ENCODE measurements at regions of chr1 and their contacts with region 1.

Region 1: GRCh38 chr1:55140546-55140983 is 74.6 kb downstream of the USP24 start:
- DNase-seq: peak; percentile 50
- H3K4me3 Mint-ChIP-seq: no peak overlapping the region
- H3K27ac Mint-ChIP-seq: peak overlapping the region; percentile 46
- H3K4me1 Mint-ChIP-seq: peaks cover 17% of the 10 kb centered on the region
- H3K27me3 Mint-ChIP-seq: no peaks in the 10 kb centered on the region

Region 2: GRCh38 chr1:55150880-55151588 is 10.5 kb after region 1 on chr1:
- intact Hi-C with region 1: loop called (anchors 1 kb)
- DNase-seq: no peak
- H3K4me3 Mint-ChIP-seq: peak overlapping the region; percentile 68
- H3K27ac Mint-ChIP-seq: peak overlapping the region; percentile 91
- H3K4me1 Mint-ChIP-seq: peaks cover 20% of the 10 kb centered on the region
- H3K27me3 Mint-ChIP-seq: no peaks in the 10 kb centered on the region

Region 3: DNA sequence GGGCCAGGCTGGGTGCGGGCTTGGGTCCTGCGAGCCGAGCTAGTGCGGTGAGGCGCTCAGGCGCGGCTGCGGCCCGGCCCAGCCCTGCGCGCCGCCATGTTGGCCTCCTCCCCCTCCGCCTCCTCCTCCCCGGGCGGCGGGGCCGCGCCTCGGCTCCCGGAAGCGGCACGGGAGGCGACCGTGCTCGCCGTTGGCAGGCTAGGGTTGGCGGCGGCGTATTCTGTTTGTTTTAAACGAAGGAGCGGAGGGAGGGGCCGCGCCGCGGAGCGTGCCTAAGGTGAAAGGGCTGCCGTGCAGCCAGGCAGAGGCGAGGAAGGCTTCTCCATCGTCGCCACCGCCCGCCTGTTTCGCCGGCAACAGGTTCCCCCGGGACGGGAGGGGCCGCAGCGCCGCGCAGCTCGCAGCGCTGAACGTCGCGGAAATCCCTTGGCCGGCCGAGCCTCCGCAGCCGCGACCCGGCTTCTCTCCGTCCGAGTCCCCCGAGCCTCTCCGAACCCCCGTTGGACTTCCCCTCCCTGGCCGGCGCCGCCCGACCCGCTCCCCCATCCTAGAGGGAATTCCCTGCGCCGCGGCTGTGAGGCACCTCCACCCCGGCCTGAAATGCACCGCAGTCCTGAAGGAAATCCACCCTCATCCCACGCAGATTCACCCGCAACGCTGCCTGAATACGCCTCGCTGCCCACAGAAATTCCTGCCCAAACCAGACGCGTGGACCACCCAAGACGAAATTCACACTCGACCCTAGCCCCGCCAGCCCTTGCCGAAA is 74.9 kb after region 1 on chr1 and contains the start of gene USP24:
- intact Hi-C with region 1: loop called (anchors 2 kb)
- DNase-seq: peak; percentile 81
- H3K4me3 Mint-ChIP-seq: peak within 1 kb of the TSS; percentile 92
- H3K27ac Mint-ChIP-seq: peak within 1 kb of the TSS; percentile 94
- H3K4me1 Mint-ChIP-seq: peaks cover 55% of the 10 kb centered on the region
- H3K27me3 Mint-ChIP-seq: no peaks in the 10 kb centered on the region
- total RNA-seq, gene USP24: 42.6 and 44.0 TPM in 2 replicates

Region 4: DNA sequence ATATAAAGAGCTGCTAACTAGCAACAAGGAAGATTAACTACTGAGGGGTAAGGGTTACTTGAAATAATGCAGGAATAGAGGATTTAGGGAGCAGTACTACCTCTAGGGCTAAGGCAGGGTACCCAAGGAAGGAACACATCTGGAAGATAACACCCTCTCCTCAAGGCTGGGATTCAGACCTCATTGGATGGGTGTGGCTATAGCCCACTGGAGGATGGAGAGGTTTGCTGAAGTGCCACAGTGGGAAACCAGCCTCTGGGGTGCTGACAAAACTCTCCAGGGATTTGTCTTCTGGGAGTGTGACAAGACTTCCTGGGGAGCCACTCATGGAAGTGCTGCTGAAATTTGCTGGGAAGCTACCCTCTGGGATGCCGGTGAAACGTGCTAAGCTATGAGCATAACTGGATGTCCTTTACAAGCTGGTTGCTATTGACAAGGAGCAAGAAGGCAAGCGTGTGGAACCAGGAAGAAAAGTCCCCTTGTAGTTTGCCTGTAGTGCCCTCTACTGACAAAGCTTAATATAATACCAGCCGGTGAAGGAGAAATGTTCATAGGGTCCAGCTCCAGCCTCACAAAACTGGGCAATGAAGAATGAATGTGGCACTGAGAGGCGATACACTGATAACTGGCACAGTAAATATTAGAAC is 197.4 kb after region 1 on chr1:
- intact Hi-C with region 1: loop called (anchors 1 kb)
- DNase-seq: peak; percentile 9
- H3K4me3 Mint-ChIP-seq: no peak overlapping the region
- H3K27ac Mint-ChIP-seq: no peak overlapping the region
- H3K4me1 Mint-ChIP-seq: peaks cover 14% of the 10 kb centered on the region
- H3K27me3 Mint-ChIP-seq: peaks cover 7% of the 10 kb centered on the region

Region 5: DNA sequence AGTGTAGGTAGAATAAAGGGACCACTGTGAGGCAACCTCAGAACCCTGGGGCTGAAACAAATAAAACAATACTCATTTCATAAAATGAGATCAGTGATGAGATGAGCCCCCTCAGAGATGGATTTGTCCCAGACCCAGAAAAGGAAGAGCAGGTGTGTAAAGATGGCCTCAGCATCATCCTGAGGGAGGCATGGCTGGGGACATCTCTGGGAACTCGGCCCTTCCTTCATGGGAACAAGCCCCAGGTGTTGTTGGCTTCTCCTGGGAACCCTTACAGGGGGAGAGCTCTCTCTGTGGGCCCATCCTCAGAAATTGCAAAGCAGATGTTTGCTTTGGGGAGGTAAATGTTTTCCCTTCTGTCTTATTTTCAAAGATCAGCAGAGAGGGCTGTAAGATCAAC is 207.8 kb after region 1 on chr1:
- intact Hi-C with region 1: no loop called
- DNase-seq: no peak
- H3K4me3 Mint-ChIP-seq: no peak overlapping the region
- H3K27ac Mint-ChIP-seq: no peak overlapping the region
- H3K4me1 Mint-ChIP-seq: no peaks in the 10 kb centered on the region
- H3K27me3 Mint-ChIP-seq: peaks cover 10% of the 10 kb centered on the region

Measured in activated T-helper 2 cell treated with anti-CD3 and anti-CD28 coated beads, Interferon-gamma antibody, Interleukin-2, Interleukin-4, amounts not matched to agents 10 μg/mL and 5 μg/mL and 100 μg/mL, durations not matched to agents 14 hours and 24 hours and 36 hours (primary cell).